Right ventricle myocardium superior (tissue), 1 donor: ENCODE measurements at regions of chr6 and their contacts with region 1.

Region 1: GRCh38 chr6:24855395-24856245 is 56.9 kb upstream of the ARMH2 start:
- DNase-seq: peak; percentile 58
- ATAC-seq: peak; percentile 84

Region 2: GRCh38 chr6:24827162-24827561 is 28.5 kb before region 1 on chr6:
- intact Hi-C with region 1: no loop called
- DNase-seq: no peak
- ATAC-seq: no peak

Region 3: DNA sequence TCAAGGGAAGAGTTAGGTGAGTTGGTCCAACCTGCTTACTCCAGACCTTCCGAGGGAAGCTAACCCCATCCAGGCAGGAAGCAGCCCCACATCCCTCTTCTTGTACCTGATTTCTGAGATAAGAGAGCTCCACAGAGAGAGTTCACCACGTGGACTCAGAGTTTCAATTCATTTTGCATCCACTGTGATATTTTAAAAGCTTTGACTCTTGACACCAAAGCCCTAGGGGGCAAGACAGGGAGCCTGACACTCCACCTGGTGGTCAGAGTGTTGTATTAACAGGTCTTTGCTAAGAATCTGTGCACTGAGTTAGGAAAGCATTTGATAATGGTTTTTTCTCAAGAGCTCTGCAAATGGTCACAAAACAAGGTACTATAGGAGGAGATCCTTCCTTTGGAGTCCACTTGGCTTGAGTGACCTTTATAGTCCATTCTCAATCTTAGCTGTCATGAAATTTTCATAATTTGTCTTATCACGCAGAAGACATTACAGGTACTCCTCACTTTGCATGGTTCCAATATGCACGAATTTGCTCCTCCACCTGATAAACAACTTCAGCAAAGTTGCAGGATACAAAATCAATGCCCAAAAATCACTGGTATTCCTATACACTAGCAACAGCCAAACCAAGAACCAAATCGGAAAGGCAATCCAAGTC is 136.3 kb after region 1 on chr6:
- intact Hi-C with region 1: loop called (anchors 2 kb)
- DNase-seq: no peak
- ATAC-seq: peak; percentile 81

Region 4: GRCh38 chr6:25070547-25071366 is 215.1 kb after region 1 on chr6:
- intact Hi-C with region 1: loop called (anchors 5 kb)
- DNase-seq: peak; percentile 74
- ATAC-seq: peak; percentile 88